HepG2 (cell line): ENCODE measurements at regions of chr9 and their contacts with region 1.

Region 1: DNA sequence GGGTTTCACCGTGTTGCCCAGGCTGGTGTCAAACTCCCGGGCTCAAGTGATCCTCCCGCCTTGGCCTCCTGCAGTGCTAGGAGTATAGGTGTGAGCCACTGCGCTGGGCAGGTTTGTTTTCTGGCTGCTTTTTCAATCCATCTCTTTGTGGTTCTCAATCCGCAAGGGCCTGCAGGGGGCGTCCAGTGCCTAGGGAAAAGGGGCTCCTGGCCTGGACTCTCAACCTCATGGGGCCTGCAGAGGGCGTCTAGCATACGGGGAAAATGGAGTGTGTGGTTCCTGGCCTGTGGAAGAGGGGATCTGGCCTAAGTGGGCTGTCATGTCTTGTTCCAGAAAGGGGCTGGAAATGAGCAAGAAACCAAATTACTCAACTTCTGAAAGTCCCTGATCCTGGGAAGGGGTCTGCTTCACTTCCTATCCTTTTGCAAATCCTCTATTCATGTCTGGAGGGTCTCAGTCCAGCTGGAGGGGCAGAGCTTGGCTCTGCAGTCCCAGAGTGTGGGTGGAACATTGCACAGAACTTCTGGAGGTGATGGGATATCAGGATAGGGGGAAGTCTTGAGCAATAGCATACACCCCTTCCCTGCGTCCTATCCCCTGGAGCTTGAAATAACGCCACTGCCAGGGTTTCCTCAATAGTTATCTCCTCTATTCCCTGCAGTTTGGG is 12.7 kb upstream of the CCL27 start:
- DNase-seq: peak; percentile 80
- ATAC-seq: peak; percentile 99
- H3K4me3 ChIP-seq: no peak overlapping the region
- H3K27ac ChIP-seq: no peak overlapping the region
- H3K4me1 ChIP-seq: peaks cover 4% of the 10 kb centered on the region; the same call in 1 of the 2 replicates
- H3K27me3 ChIP-seq: no peaks in the 10 kb centered on the region
- CTCF ChIP-seq: peak; percentile 99
- EP300 ChIP-seq: no peak
- POLR2A ChIP-seq: no peak
- RAD21 ChIP-seq: peak; percentile 98

Region 2: GRCh38 chr9:34688329-34689115 is 13.3 kb after region 1 on chr9:
- CTCF ChIA-PET with region 1: no interaction called
- POLR2A ChIA-PET with region 1: no interaction called
- in situ Hi-C with region 1: no loop called
- intact Hi-C with region 1: loop called (anchors 1 kb)
- DNase-seq: peak; percentile 70
- ATAC-seq: peak; percentile 94
- H3K4me3 ChIP-seq: peak overlapping the region in 1 of 3 experiments; percentile 36; a peak in 1 of 6 replicates
- H3K27ac ChIP-seq: peak overlapping the region; percentile 37
- H3K4me1 ChIP-seq: peaks cover 56% of the 10 kb centered on the region
- H3K27me3 ChIP-seq: no peaks in the 10 kb centered on the region
- CTCF ChIP-seq: peak; percentile 18; the same call in 1 of the 2 replicates
- EP300 ChIP-seq: peak; percentile 39 to 75; a peak in 2 of 4 replicates
- POLR2A ChIP-seq: no peak
- RAD21 ChIP-seq: no peak

Region 3: GRCh38 chr9:34701769-34702736 is 26.9 kb after region 1 on chr9:
- CTCF ChIA-PET with region 1: interaction called, 178 read pairs
- POLR2A ChIA-PET with region 1: interaction called, 3 read pairs
- in situ Hi-C with region 1: no loop called
- intact Hi-C with region 1: loop called (anchors 1 kb)
- DNase-seq: peak; percentile 47
- ATAC-seq: peak; percentile 94
- H3K4me3 ChIP-seq: peak overlapping the region; percentile 52 to 72 (median 58)
- H3K27ac ChIP-seq: no peak overlapping the region
- H3K4me1 ChIP-seq: peaks cover 10% of the 10 kb centered on the region; the same call in 1 of the 2 replicates
- H3K27me3 ChIP-seq: peaks cover 5 to 18% of the 10 kb centered on the region in 2 experiments; a peak in 4 of 5 replicates
- CTCF ChIP-seq: peak; percentile 96
- EP300 ChIP-seq: no peak
- POLR2A ChIP-seq: no peak
- RAD21 ChIP-seq: peak; percentile 92